PC-3 (cell line): ENCODE measurements at regions of chr16 and their contacts with region 1.

Region 1: DNA sequence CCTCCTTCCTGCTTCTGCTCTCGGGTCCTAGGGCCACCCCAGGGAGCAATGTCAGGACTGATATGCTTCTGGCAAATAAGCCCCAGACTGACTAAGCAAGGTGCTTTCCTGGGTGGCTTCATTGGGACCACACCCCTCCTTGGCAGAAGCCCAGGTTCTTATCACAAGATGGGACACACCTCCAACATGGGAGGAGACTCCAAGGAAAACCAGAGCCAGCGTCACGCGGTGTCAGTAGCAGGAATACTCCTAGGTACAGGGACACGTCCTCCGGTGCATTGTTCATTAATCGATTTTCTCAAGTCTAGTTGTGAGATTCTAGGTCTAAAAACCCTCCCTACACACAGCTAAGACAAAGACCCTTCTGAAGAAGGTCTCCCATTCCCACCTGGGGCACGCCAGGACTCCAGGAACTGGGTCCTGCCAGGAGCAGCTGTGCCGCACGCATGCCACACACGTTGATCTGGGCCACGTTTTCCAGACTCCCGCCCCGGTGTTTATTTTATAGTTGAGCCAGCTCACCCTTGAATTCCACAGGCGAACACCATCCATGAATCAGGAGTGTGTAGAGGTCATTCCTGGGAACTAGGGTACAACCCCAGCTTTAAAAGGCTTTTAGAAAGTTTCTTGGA is 30.8 kb downstream of the FA2H start:
- DNase-seq: peak; percentile 95
- ATAC-seq: peak; percentile 77
- H3K4me3 ChIP-seq: peak overlapping the region; percentile 16; the same call in 1 of the 2 replicates
- H3K27ac ChIP-seq: peak overlapping the region; percentile 90
- H3K4me1 ChIP-seq: peaks cover 43% of the 10 kb centered on the region
- H3K27me3 ChIP-seq: no peaks in the 10 kb centered on the region
- CTCF ChIP-seq: no peak

Region 2: DNA sequence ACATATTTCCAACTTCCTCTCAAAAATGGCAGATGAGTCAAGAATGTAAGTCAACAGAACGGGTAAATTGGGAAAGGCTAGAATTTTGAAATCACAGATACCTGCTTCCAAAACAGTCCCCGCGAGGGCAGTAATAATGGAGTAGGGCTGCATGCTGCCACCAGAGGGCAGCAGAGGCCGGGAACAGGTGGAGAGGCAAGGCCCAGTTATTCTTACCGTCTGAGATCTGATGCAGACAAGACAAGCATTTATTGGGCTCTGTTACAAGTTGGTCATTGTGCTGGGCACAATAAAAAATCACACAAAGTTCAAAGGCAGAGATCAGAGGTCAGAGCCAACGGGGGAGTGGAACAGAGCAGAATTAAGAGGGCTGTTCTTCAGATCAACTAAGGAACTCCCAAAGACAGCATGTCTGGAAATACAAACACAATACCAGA is 34.3 kb before region 1 on chr16:
- CTCF ChIA-PET with region 1: no interaction called
- POLR2A ChIA-PET with region 1: no interaction called
- intact Hi-C with region 1: loop called (anchors 5 kb)
- DNase-seq: peak; percentile 90
- ATAC-seq: peak; percentile 97
- H3K4me3 ChIP-seq: no peak overlapping the region
- H3K27ac ChIP-seq: no peak overlapping the region; the same call in 1 of the 2 replicates
- H3K4me1 ChIP-seq: peaks cover 3% of the 10 kb centered on the region; the same call in 1 of the 2 replicates
- H3K27me3 ChIP-seq: no peaks in the 10 kb centered on the region
- CTCF ChIP-seq: peak; percentile 93